ENCODE measurements at regions of chr6 and their contacts with region 1.

Region 1: GRCh38 chr6:8983188-8983688 is 547.9 kb upstream of the SLC35B3 start:
- DNase-seq: peak; percentile 96
- H3K4me3 ChIP-seq: no peak overlapping the region
- H3K27ac ChIP-seq: no peak overlapping the region
- H3K4me1 ChIP-seq: peaks cover 19% of the 10 kb centered on the region
- H3K27me3 ChIP-seq: no peaks in the 10 kb centered on the region
- CTCF ChIP-seq: peak; percentile 98

Region 2: DNA sequence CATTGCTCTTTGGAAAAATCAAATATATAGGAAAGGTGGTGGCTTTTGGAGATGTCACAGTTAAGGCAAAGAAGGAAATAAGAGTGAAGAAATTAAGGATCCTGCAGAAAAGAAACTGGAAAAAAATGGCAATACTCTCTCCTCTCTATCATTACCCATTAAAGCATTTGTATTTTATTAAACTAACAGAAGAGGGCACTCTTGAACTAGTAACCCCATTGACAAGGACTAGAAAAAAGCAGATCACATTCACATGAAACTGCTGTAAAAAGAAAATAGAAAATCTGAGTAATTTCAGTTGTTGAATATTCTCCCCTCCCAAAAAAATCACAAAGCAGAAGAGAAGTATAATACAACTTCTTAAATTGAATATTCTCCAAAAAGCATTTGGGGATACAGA is 443.8 kb before region 1 on chr6:
- CTCF ChIA-PET with region 1: no interaction called
- POLR2A ChIA-PET with region 1: no interaction called
- intact Hi-C with region 1: loop called (anchors 5 kb)
- DNase-seq: peak; percentile 72
- H3K4me3 ChIP-seq: no peak overlapping the region
- H3K27ac ChIP-seq: no peak overlapping the region
- H3K4me1 ChIP-seq: no peaks in the 10 kb centered on the region
- H3K27me3 ChIP-seq: no peaks in the 10 kb centered on the region
- CTCF ChIP-seq: peak; percentile 62

Region 3: GRCh38 chr6:9250852-9251251 is 267.6 kb after region 1 on chr6:
- CTCF ChIA-PET with region 1: interaction called, 3 read pairs
- POLR2A ChIA-PET with region 1: no interaction called
- intact Hi-C with region 1: loop called (anchors 5 kb)
- DNase-seq: peak; percentile 59
- H3K4me3 ChIP-seq: no peak overlapping the region
- H3K27ac ChIP-seq: no peak overlapping the region
- H3K4me1 ChIP-seq: peaks cover 7% of the 10 kb centered on the region
- H3K27me3 ChIP-seq: no peaks in the 10 kb centered on the region
- CTCF ChIP-seq: peak; percentile 70

Region 4: GRCh38 chr6:9554806-9555205 is 571.6 kb after region 1 on chr6:
- CTCF ChIA-PET with region 1: no interaction called
- POLR2A ChIA-PET with region 1: no interaction called
- intact Hi-C with region 1: loop called (anchors 10 kb)
- DNase-seq: peak; percentile 96
- H3K4me3 ChIP-seq: no peak overlapping the region
- H3K27ac ChIP-seq: no peak overlapping the region
- H3K4me1 ChIP-seq: peaks cover 22% of the 10 kb centered on the region
- H3K27me3 ChIP-seq: peaks cover 26% of the 10 kb centered on the region
- CTCF ChIP-seq: no peak

Region 5: DNA sequence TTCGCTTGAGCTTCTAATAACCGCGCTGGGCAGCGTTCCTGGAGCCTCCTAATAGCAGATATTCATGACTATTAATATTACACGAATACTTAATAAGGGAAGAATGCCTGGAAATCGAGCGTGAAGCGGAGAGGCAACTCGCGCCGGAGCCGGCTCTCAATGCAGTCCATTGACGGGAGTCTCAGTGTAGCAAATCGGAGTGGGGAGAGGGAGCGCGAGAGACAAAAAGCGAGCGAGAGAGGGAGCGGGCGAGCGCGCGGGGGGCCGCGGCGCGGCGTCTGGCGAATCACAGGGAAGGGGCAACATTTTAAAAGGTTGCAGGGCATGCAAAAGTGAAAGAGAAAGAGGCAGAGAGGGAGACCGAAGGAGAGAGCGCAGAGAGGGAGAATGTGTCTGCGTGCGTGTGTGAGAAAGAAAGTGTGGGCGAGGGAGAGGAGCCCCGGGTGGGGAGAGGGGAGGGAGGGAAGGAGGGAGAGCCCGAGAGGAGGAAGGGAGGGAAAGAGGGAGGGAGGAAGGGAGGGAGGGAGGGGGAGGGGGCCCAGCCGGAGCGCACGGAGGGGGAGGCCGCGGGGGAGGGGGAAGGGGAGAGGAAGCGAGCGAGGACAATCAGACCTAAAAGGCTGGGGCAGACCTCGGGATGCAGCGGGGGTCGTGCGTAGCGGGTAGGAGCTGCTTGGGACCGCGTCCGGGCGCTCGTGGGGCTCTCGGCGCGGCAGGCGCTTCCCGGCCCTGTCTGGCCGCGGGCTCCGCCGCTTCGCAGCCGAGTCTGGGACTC is 1428.9 kb after region 1 on chr6:
- CTCF ChIA-PET with region 1: interaction called, 7 read pairs
- POLR2A ChIA-PET with region 1: no interaction called
- intact Hi-C with region 1: loop called (anchors 5 kb)
- DNase-seq: peak; percentile 95
- H3K4me3 ChIP-seq: peak overlapping the region; percentile 75
- H3K27ac ChIP-seq: peak overlapping the region; percentile 83
- H3K4me1 ChIP-seq: peaks cover 40% of the 10 kb centered on the region
- H3K27me3 ChIP-seq: no peaks in the 10 kb centered on the region
- CTCF ChIP-seq: no peak